Activated CD8-positive, alpha-beta memory T cell treated with anti-CD3 and anti-CD28 coated beads, Interleukin-2, amount 10 ng/mL, durations not matched to agents 7 days and 5 days (primary cell): ENCODE measurements at regions of chr21 and their contacts with region 1.

Region 1: DNA sequence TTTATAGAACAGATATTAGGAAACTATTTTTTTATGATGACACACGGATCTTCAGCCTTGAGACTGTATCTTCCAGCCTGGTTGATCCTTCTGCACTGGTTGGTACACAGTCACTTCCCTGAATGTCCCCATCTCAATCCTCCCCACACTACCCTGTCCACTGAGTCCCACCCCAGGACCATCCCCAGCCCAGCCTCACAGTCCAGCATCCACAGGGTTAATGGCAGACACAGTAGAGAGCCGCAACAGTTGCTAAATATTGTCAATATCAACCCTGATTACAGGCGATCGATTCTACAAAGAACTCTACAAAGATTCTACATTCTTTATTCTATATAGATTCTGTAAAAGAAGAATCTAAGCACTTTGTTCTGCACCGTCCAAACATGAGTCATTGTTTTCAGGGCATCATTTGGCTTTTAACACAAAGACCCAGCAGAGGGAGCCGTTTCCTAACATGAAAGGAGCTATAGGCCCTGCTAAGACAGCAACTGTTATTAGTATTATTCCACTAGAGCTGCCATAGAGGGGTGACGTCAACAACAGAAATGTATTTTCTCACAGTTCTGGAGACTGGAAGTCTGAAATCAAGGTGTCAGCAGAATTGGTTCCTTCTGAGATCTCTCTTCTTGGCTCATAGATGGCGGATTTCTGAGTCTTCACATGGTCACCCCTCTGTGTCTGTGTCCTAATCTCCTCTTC is 30.1 kb upstream of the IFNAR2 start:
- DNase-seq: peak; percentile 87
- ATAC-seq: peak; percentile 89
- H3K4me3 Mint-ChIP-seq: no peak overlapping the region
- H3K27ac Mint-ChIP-seq: peak overlapping the region; percentile 37
- H3K4me1 Mint-ChIP-seq: peaks cover 22% of the 10 kb centered on the region
- H3K27me3 Mint-ChIP-seq: peaks cover 27% of the 10 kb centered on the region

Region 2: GRCh38 chr21:32834211-32834915 is 365.3 kb before region 1 on chr21:
- CTCF ChIA-PET with region 1: interaction called, 23 read pairs
- DNase-seq: no peak
- ATAC-seq: no peak
- H3K4me3 Mint-ChIP-seq: no peak overlapping the region
- H3K27ac Mint-ChIP-seq: no peak overlapping the region
- H3K4me1 Mint-ChIP-seq: peaks cover 1% of the 10 kb centered on the region
- H3K27me3 Mint-ChIP-seq: peaks cover 26% of the 10 kb centered on the region

Region 3: GRCh38 chr21:32940079-32941014 is 259.3 kb before region 1 on chr21:
- CTCF ChIA-PET with region 1: interaction called, 26 read pairs
- DNase-seq: peak; percentile 45
- ATAC-seq: peak; percentile 23
- H3K4me3 Mint-ChIP-seq: no peak overlapping the region
- H3K27ac Mint-ChIP-seq: no peak overlapping the region
- H3K4me1 Mint-ChIP-seq: peaks cover 5% of the 10 kb centered on the region
- H3K27me3 Mint-ChIP-seq: peaks cover 39% of the 10 kb centered on the region

Region 4: DNA sequence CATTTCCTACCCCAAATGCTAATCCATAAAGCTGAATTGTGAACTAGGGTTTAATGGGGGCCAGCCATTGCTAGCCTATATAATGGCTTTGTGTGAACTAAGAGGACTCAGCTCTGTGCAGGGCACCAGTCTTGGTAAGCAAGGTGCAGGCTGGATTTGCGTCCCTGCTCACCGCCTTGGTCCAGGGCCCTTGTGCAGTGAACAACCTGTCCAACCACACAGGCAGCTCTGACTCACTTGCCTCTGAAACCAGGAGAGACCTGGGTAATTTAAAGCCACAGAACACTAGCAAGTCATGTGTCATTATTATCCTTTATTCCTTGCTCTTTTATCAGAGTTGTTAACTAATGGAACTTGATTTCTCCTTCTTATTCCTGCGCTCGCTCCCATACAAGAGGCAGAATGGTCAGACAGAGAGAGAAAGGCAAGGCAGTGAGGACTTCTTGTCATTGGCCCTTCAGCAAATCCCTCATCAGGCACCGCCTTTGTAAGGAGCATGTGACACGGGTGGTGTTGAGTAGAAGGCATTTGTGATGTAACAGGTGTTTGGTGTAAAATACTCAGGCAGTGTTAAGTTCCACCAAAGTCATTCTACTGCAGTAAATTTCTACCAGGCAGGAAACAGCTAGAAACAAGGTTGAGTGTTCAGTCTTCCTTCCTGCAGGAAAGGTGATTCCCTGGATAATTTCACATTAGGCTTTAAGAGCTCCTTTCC is 241.2 kb before region 1 on chr21:
- CTCF ChIA-PET with region 1: no interaction called
- DNase-seq: no peak
- ATAC-seq: no peak
- H3K4me3 Mint-ChIP-seq: no peak overlapping the region
- H3K27ac Mint-ChIP-seq: no peak overlapping the region
- H3K4me1 Mint-ChIP-seq: no peaks in the 10 kb centered on the region
- H3K27me3 Mint-ChIP-seq: peaks cover 80% of the 10 kb centered on the region

Region 5: GRCh38 chr21:33127154-33127893 is 72.3 kb before region 1 on chr21:
- CTCF ChIA-PET with region 1: interaction called, 32 read pairs
- DNase-seq: peak; percentile 76
- ATAC-seq: peak; percentile 76
- H3K4me3 Mint-ChIP-seq: peak overlapping the region; percentile 53
- H3K27ac Mint-ChIP-seq: no peak overlapping the region
- H3K4me1 Mint-ChIP-seq: no peaks in the 10 kb centered on the region
- H3K27me3 Mint-ChIP-seq: peaks cover 34% of the 10 kb centered on the region

Region 6: DNA sequence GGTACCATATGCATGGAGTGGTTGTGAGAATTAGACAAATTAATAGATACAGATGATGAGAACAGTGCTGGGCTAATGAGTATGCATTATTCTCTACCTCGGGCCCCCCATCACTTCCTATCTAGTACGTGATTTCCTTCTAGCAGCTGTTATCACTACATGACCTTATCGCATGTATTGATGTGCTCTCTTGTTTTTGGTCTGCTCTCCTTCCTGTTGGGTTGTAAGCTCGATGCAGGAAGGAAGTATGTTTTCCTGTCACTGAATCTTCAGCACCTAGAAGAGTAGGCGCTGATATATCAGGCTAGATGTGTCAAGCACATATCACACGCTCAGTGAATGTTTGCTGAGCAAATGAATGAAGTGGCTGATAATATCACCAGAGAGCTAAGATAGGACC is 13.8 kb before region 1 on chr21:
- CTCF ChIA-PET with region 1: interaction called, 37 read pairs
- DNase-seq: peak; percentile 56
- ATAC-seq: peak; percentile 94
- H3K4me3 Mint-ChIP-seq: peak overlapping the region; percentile 45
- H3K27ac Mint-ChIP-seq: peak overlapping the region; percentile 90
- H3K4me1 Mint-ChIP-seq: peaks cover 21% of the 10 kb centered on the region
- H3K27me3 Mint-ChIP-seq: peaks cover 19% of the 10 kb centered on the region

Region 7: DNA sequence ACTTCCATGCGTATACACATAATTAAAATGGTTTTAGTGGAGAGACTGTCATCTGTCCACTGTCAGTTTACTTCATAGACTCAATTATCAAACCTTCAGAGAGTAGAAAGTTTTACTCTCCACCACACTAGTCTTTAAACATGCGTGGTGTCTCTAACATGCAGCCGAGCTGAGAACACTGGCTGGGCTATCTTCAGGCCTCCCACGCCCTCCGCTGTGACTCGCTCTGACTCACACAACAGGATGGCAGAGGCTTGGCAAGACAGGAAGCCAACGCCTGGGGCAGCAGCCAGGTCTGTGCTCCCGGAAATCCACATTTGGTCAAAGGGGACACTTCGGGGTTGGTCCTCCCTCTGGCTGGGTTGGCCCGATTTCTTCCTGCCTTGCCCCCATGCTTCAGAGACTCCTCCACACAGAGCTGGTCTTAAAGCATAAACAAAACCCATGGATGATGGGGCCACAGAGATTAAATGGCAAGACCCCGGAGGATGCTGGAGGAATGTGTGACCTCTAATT is 180.9 kb after region 1 on chr21:
- CTCF ChIA-PET with region 1: interaction called, 11 read pairs
- DNase-seq: peak; percentile 91
- ATAC-seq: peak; percentile 87
- H3K4me3 Mint-ChIP-seq: no peak overlapping the region
- H3K27ac Mint-ChIP-seq: peak overlapping the region; percentile 52
- H3K4me1 Mint-ChIP-seq: peaks cover 56% of the 10 kb centered on the region
- H3K27me3 Mint-ChIP-seq: peaks cover 77% of the 10 kb centered on the region

Region 8: GRCh38 chr21:33441489-33442477 is 242.1 kb after region 1 on chr21:
- CTCF ChIA-PET with region 1: interaction called, 30 read pairs
- DNase-seq: no peak
- ATAC-seq: no peak
- H3K4me3 Mint-ChIP-seq: no peak overlapping the region
- H3K27ac Mint-ChIP-seq: no peak overlapping the region
- H3K4me1 Mint-ChIP-seq: peaks cover 3% of the 10 kb centered on the region
- H3K27me3 Mint-ChIP-seq: no peaks in the 10 kb centered on the region